ENCODE measurements at regions of chr5 and their contacts with region 1.

Region 1: DNA sequence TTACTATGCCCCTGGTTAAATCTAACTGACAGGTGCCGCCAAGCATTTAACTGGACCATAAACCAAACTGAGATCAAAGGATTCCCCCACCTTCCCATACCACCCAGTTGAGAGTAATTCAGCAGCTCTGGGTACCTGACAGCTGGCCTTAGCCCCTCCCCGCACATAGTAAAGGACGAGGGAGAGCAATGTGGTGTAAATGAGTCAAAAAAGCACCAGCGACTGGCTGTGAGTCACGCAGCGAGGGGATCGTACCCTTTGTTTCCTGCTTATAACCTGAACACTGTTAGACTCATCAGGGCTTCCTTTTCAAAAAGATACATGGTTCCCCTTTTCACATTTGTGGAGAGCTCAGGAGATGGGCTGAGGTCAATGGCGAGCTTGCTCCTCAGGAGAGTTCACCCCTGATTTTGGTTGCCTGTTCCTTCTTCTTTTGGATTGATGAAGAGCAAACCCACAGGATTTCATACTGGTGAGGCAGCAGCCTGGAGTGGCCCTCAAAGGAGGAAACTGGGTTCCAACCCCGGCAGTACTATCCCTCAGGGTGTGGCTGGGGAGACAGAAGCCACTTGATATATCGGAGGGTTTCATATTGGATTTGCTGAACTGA is 71.5 kb downstream of the ANKRD33B start:
- DNase-seq: peak; percentile 89
- H3K4me3 Mint-ChIP-seq: peak overlapping the region; percentile 81
- H3K27ac Mint-ChIP-seq: peak overlapping the region; percentile 98
- H3K4me1 Mint-ChIP-seq: peaks cover 71% of the 10 kb centered on the region
- H3K27me3 Mint-ChIP-seq: no peaks in the 10 kb centered on the region

Region 2: GRCh38 chr5:9971301-9971700 is 664.1 kb before region 1 on chr5:
- intact Hi-C with region 1: no loop called
- DNase-seq: no peak
- H3K4me3 Mint-ChIP-seq: no peak overlapping the region
- H3K27ac Mint-ChIP-seq: no peak overlapping the region
- H3K4me1 Mint-ChIP-seq: no peaks in the 10 kb centered on the region
- H3K27me3 Mint-ChIP-seq: no peaks in the 10 kb centered on the region

Region 3: GRCh38 chr5:10249948-10250803 is 385.2 kb before region 1 on chr5 and contains the start of gene CCT5:
- intact Hi-C with region 1: loop called (anchors 2 kb)
- DNase-seq: peak; percentile 97
- H3K4me3 Mint-ChIP-seq: peak within 1 kb of the TSS; percentile 96
- H3K27ac Mint-ChIP-seq: peak within 1 kb of the TSS; percentile 96
- H3K4me1 Mint-ChIP-seq: peaks cover 40% of the 10 kb centered on the region
- H3K27me3 Mint-ChIP-seq: peaks cover 3% of the 10 kb centered on the region
- total RNA-seq, gene CCT5: 566 and 581 TPM in 2 replicates

Region 4: GRCh38 chr5:10577371-10578292 is 57.7 kb before region 1 on chr5:
- intact Hi-C with region 1: loop called (anchors 1 kb)
- DNase-seq: no peak
- H3K4me3 Mint-ChIP-seq: peak overlapping the region; percentile 3
- H3K27ac Mint-ChIP-seq: peak overlapping the region; percentile 7
- H3K4me1 Mint-ChIP-seq: peaks cover 42% of the 10 kb centered on the region
- H3K27me3 Mint-ChIP-seq: no peaks in the 10 kb centered on the region

Region 5: GRCh38 chr5:10655161-10655971 is 20.0 kb after region 1 on chr5:
- intact Hi-C with region 1: no loop called
- DNase-seq: no peak
- H3K4me3 Mint-ChIP-seq: no peak overlapping the region
- H3K27ac Mint-ChIP-seq: no peak overlapping the region
- H3K4me1 Mint-ChIP-seq: no peaks in the 10 kb centered on the region
- H3K27me3 Mint-ChIP-seq: no peaks in the 10 kb centered on the region

Region 6: DNA sequence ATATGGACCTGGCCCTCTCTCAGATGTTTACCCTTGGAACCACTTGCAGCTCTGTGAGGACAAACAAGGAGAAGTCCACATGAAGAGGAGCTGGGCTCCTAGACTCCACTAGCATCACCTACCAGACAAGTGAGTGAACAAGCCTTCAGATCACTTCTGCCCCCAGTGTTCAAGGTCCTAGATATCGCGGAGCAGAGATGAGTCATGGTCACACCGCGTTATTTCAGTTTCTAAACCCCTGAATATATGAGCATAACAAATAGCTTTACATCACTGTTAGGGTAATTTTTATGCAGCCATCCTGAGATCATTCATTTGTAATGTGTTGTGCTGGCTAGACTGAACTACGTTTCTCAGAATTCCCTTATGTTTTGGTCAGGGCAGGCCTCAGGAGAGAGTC is 202.7 kb after region 1 on chr5:
- intact Hi-C with region 1: no loop called
- DNase-seq: no peak
- H3K4me3 Mint-ChIP-seq: no peak overlapping the region
- H3K27ac Mint-ChIP-seq: no peak overlapping the region
- H3K4me1 Mint-ChIP-seq: no peaks in the 10 kb centered on the region
- H3K27me3 Mint-ChIP-seq: peaks cover 11% of the 10 kb centered on the region